CD8-positive, alpha-beta memory T cell (primary cell): ENCODE measurements at regions of chr1 and their contacts with region 1.

Region 1: DNA sequence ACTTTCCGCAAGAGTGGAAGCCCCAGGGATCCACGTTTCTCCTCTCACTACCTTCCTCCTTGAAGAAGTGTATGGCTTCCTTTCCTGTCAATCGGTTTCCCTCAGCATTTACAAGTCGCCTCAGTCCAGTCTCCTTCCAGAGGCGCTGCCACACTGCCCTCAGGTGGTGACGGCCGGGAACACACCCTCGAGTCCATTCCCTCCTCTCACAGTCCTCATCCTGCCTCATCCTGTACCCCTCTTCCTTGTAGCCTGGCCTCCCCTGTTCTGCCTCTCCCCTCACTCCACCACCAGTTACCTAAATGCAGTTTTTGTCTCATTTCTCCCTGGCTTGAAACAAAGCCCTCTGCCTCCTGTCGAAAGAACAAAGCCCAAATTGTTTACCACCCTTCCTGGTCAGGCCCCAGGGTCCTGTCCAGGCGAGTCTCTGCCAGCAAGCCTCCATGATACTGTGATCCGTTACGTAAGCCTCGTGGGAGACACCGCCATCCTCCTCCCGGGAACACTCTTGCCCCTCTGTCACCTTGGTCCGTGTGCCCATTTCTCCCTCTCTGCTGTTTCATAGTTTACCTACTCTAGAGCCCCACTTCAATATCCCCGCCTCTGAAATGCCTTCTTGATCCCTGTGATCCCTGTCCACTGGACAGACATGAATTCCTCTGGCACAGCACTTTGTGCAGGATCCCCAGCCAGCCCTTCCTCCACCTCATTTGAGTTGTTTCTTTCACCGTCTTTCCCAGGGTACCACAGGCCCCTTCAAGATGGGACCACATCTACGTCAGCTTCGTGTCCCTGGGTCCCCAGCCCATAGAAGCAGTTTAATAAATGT is 23.3 kb upstream of the LSM10 start:
- DNase-seq: peak; percentile 76 to 89 (median 83)
- H3K4me3 ChIP-seq: peak overlapping the region; percentile 33
- H3K4me3 Mint-ChIP-seq: peak overlapping the region in 6 of 7 donors; percentile 58 to 77 (median 68)
- H3K27ac ChIP-seq: no peak overlapping the region
- H3K27ac Mint-ChIP-seq: peak overlapping the region; percentile 56 to 96 (median 88)
- H3K4me1 ChIP-seq: peaks cover 23% of the 10 kb centered on the region
- H3K4me1 Mint-ChIP-seq: peaks cover 11 to 13% (median 13%) of the 10 kb centered on the region in 3 donors
- H3K27me3 ChIP-seq: no peaks in the 10 kb centered on the region
- H3K27me3 Mint-ChIP-seq: no peaks in the 10 kb centered on the region

Region 2: GRCh38 chr1:36342481-36343478 is 78.3 kb before region 1 on chr1:
- CTCF ChIA-PET with region 1: interaction called, 23 read pairs
- POLR2A ChIA-PET with region 1: no interaction called
- DNase-seq: peak; percentile 41 to 70 (median 46)
- H3K4me3 ChIP-seq: no peak overlapping the region
- H3K4me3 Mint-ChIP-seq: no peak overlapping the region
- H3K27ac ChIP-seq: no peak overlapping the region
- H3K27ac Mint-ChIP-seq: peak overlapping the region in 4 of 8 donors; percentile 17 to 66 (median 55)
- H3K4me1 ChIP-seq: peaks cover 10% of the 10 kb centered on the region
- H3K4me1 Mint-ChIP-seq: peaks cover 3 to 9% (median 4%) of the 10 kb centered on the region in 3 donors
- H3K27me3 ChIP-seq: no peaks in the 10 kb centered on the region
- H3K27me3 Mint-ChIP-seq: no peaks in the 10 kb centered on the region

Region 3: GRCh38 chr1:36463803-36464604 is 43.0 kb after region 1 on chr1 and contains the start of gene MRPS15:
- CTCF ChIA-PET with region 1: no interaction called
- POLR2A ChIA-PET with region 1: no interaction called
- DNase-seq: peak; percentile 88 to 95 (median 89)
- H3K4me3 ChIP-seq: peak within 1 kb of the TSS; percentile 94
- H3K4me3 Mint-ChIP-seq: peak within 1 kb of the TSS; percentile 92 to 99 (median 98)
- H3K27ac ChIP-seq: peak within 1 kb of the TSS; percentile 91
- H3K27ac Mint-ChIP-seq: peak within 1 kb of the TSS; percentile 91 to 98 (median 97)
- H3K4me1 ChIP-seq: peaks cover 15% of the 10 kb centered on the region
- H3K4me1 Mint-ChIP-seq: peaks cover 27 to 35% (median 31%) of the 10 kb centered on the region in 3 donors
- H3K27me3 ChIP-seq: no peaks in the 10 kb centered on the region
- H3K27me3 Mint-ChIP-seq: no peaks in the 10 kb centered on the region
- total RNA-seq, gene MRPS15: 134 to 143 TPM